Endothelial cell of umbilical vein (primary cell): ENCODE measurements at regions of chr12 and their contacts with region 1.

Region 1: DNA sequence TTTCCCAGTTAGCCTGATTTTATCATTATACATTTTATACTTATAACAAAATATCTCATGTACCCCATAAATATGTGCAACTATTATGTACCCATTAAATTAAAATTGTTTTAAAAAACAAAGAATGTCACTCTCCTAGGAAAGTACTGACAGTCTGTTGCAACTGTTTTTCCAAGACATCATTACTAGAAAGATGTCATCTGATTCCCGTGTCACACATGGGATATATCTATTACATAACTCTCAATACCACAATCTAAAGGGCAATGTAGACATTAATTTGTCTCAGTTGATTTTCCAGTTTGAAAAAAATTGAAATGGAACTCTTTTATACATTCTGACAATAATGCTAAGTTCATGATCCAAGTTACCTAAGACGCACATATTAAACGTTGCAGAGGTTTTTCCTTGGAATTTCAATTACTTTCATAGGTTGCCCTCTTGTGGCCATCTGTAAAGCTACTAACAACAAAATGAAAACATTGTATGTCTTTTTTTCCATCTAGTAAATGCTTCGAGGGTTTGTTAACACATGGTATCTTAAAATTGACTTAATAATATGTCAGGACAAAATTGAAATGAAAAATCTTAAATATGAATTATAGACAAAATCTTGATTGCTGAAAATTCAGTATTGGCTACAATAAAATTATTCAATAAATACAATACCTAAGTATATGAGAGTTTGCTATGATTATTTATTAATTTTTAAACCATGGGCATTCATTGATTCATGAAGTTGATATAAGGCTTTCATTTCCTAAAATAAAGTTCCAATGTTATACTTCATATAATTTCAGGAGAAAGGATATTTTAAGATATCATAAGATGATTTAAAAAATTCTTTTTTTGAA is 131.6 kb downstream of the PPFIA2 start:
- DNase-seq: peak; percentile 47
- H3K4me3 ChIP-seq: no peak overlapping the region
- H3K27ac ChIP-seq: no peak overlapping the region
- H3K4me1 ChIP-seq: no peaks in the 10 kb centered on the region
- H3K27me3 ChIP-seq: no peaks in the 10 kb centered on the region
- CTCF ChIP-seq: peak; percentile 36 to 44
- POLR2A ChIP-seq: no peak

Region 2: GRCh38 chr12:81268664-81268926 is 359.0 kb before region 1 on chr12:
- CTCF ChIA-PET with region 1: interaction called, 9 read pairs
- POLR2A ChIA-PET with region 1: no interaction called
- dilution Hi-C with region 1: no loop called
- intact Hi-C with region 1: loop called (anchors 1 kb)
- DNase-seq: peak; percentile 31
- H3K4me3 ChIP-seq: no peak overlapping the region
- H3K27ac ChIP-seq: no peak overlapping the region
- H3K4me1 ChIP-seq: no peaks in the 10 kb centered on the region
- H3K27me3 ChIP-seq: peaks cover 0 to 8% of the 10 kb centered on the region in 2 experiments
- CTCF ChIP-seq: peak in 1 of 2 donors; percentile 14
- POLR2A ChIP-seq: no peak

Region 3: GRCh38 chr12:81329085-81329484 is 298.5 kb before region 1 on chr12:
- CTCF ChIA-PET with region 1: interaction called, 5 read pairs
- POLR2A ChIA-PET with region 1: no interaction called
- dilution Hi-C with region 1: no loop called
- intact Hi-C with region 1: loop called (anchors 5 kb)
- DNase-seq: peak; percentile 2
- H3K4me3 ChIP-seq: no peak overlapping the region
- H3K27ac ChIP-seq: no peak overlapping the region
- H3K4me1 ChIP-seq: no peaks in the 10 kb centered on the region
- H3K27me3 ChIP-seq: no peaks in the 10 kb centered on the region
- CTCF ChIP-seq: peak; percentile 30 to 39
- POLR2A ChIP-seq: no peak

Region 4: DNA sequence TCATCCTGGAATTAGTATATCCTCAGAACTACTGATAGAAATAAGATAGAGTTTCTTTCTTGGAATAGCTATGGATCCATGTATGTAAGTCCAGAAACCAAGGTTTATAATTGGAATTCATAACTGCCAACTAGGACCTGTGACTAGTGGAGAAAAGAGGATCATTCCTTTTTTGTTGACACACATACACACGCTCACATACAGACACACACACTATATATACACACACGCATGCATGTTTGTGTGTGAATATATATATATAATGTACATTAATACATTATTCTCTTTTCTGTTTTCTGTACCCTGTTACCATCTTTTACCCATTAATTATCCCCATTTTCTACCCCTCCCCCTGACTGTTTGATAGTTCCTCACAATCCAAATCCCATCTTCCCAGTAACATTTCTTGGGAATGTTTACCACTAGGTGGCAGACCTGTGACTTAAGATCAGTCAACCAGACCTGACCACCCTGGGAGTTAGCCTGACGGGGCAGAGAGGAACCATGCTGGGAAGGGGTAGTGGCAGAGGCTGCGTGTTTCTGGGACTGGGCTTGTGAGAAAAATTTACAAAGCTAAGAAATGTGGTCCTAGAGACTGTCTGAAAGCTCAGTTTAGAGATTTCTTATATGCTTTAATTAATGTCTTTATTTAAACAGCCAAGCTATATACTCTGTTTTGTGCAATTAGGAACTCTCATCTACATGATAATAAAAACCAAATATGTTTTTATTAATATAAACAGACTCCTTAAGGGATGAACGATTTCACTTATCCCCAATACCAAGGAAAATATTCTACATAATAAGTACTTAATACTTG is 176.4 kb before region 1 on chr12:
- CTCF ChIA-PET with region 1: interaction called, 17 read pairs
- POLR2A ChIA-PET with region 1: no interaction called
- dilution Hi-C with region 1: no loop called
- intact Hi-C with region 1: loop called (anchors 1 kb)
- DNase-seq: peak; percentile 54
- H3K4me3 ChIP-seq: no peak overlapping the region
- H3K27ac ChIP-seq: no peak overlapping the region
- H3K4me1 ChIP-seq: no peaks in the 10 kb centered on the region
- H3K27me3 ChIP-seq: no peaks in the 10 kb centered on the region
- CTCF ChIP-seq: peak; percentile 53 to 57
- POLR2A ChIP-seq: no peak

Region 5: GRCh38 chr12:81585787-81586186 is 41.8 kb before region 1 on chr12:
- CTCF ChIA-PET with region 1: no interaction called
- POLR2A ChIA-PET with region 1: no interaction called
- dilution Hi-C with region 1: no loop called
- intact Hi-C with region 1: no loop called
- DNase-seq: no peak
- H3K4me3 ChIP-seq: no peak overlapping the region
- H3K27ac ChIP-seq: no peak overlapping the region
- H3K4me1 ChIP-seq: no peaks in the 10 kb centered on the region
- H3K27me3 ChIP-seq: no peaks in the 10 kb centered on the region
- CTCF ChIP-seq: no peak
- POLR2A ChIP-seq: no peak

Region 6: DNA sequence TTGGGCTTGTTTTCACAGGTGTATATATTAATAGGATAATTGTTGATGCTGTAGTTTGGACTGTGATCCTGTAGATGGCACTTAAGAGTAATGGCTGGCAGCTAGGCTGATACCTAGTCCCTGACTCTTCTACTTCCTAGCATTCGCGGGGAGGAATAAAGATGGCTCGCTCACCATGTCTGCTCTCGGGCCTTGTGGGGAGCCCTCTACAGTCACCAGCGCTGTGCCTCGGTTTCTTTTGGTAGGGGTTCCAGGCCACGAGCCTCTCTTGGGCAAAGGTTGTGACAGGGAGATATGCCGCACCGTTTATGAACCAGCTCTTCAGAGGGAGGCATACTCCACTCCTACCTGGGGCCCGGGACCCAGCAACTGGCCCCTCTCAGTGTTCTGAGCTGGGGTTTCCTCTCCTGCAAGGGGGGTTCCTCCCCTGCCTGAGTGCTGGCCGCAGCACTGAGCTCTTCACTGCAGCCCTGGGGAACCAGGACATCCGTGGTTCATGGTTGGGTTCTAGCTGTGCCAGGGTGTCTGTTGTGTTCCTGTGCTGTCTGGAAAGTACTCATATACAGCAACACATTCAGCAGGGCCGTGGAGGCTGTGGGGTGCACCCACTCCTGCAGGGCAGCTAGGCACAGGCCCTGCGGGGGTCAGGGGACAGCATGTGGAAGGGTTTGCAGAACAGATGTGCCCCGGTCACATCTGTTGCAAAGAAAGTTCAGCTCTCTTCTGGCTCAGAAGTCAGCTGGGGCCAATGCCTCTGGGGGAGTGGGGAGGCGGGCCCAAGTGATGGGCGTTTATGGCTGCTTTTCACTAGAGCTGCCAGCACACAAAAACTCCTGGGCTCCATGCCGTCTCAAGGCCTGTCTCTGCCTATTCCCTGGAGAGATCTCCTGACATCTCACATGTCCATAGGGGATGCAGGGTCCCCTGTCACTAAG is 16.3 kb before region 1 on chr12:
- CTCF ChIA-PET with region 1: interaction called, 13 read pairs
- POLR2A ChIA-PET with region 1: no interaction called
- dilution Hi-C with region 1: no loop called
- intact Hi-C with region 1: no loop called
- DNase-seq: peak; percentile 2
- H3K4me3 ChIP-seq: no peak overlapping the region
- H3K27ac ChIP-seq: no peak overlapping the region
- H3K4me1 ChIP-seq: no peaks in the 10 kb centered on the region
- H3K27me3 ChIP-seq: no peaks in the 10 kb centered on the region
- CTCF ChIP-seq: peak; percentile 10 to 22
- POLR2A ChIP-seq: no peak